Right lobe of liver (tissue), 6 donors: ENCODE measurements at regions of chr17 and their contacts with region 1.

Region 1: DNA sequence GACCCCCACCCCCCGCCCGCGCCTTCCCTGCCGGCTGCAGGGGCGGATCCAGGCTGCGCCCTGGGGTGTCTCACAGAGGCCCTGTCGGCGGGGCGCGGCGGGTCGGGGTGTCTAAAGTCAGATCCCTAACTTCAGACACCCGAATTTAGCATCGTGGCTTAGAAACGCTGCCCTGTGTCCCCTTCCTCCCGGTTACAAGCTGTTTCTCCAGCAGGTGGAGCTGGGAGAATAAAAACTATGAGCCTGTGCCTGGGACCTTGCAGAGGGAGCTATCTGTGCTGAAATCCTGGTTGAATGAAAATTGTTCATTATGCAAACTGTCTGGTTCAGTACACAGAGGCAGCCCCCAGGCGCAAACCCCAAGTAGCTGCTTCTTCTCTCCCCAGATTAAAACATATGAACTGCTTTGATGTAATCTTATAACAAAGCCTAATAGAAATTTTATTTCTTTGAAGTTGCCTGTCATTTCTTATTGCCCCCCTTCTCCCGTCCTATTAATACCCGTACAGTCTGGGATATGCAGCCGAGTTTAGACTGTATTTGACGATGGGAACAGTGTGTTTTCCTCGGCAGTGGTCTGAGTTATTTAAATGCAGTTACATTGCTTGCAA is 79.0 kb downstream of the RPA1 start:
- DNase-seq: peak; percentile 32 to 72 (median 56)
- ATAC-seq: peak; percentile 82 to 89 (median 86)
- H3K4me3 ChIP-seq: no peak overlapping the region
- H3K27ac ChIP-seq: no peak overlapping the region
- H3K4me1 ChIP-seq: peaks cover 3 to 20% (median 5%) of the 10 kb centered on the region in 4 donors
- H3K27me3 ChIP-seq: peaks cover 0 to 3% of the 10 kb centered on the region in 2 donors
- CTCF ChIP-seq: peak; percentile 74 to 86 (median 78)
- POLR2A ChIP-seq: no peak

Region 2: DNA sequence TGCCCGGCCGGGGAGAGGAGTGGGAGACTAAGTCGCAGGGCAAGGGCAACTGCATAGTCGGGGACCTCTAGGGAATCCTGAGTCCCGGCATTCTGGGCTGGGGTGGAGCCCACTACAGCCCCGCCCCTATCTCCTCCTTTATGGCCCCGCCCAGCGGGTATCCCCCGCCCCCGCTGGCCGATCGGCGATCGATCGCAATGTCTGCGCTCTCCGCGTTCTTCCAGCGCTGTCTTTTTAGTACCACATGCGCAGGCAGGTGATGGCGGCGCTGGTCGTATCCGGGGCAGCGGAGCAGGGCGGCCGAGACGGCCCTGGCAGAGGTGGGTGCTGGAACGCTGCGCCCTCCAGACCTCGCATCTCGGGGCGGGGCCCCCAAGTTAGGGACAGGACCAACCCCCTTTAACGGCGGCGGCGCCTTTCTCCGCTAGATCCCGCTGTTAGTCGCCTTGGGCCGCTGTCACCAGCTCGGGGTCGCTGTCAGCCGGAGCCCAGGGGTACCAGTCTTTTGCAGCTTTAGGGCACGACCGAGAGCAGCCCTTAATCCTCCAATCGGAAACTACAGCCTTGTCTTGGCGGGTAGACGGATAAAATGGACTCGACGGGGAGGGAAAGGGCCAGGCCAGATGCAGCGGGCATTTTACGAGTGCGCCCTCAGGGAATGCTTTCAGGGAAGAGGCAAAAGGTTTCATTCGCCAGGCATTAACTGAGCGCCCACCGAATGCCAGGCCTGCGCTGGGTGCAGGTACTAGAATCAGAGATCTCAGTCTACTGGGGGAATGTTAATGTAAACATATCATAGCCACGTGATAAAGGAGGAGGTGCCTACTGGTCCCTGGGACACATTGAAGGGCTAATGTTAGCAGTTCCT is 121.3 kb after region 1 on chr17 and contains the start of gene DPH1:
- intact Hi-C with region 1: loop called (anchors 5 kb)
- DNase-seq: peak; percentile 90 to 92 (median 91)
- ATAC-seq: peak; percentile 87 to 91 (median 88)
- H3K4me3 ChIP-seq: peak within 1 kb of the TSS; percentile 99 to 100 (median 99)
- H3K27ac ChIP-seq: peak within 1 kb of the TSS; percentile 48 to 57 (median 56)
- H3K4me1 ChIP-seq: peaks cover 0 to 23% (median 7%) of the 10 kb centered on the region in 4 donors
- H3K27me3 ChIP-seq: no peaks in the 10 kb centered on the region
- CTCF ChIP-seq: no peak
- POLR2A ChIP-seq: peak; percentile 12
- total RNA-seq, gene DPH1: 20.0 to 41.1 (median 25.4) TPM

Region 3: GRCh38 chr17:2041561-2042366 is 133.0 kb after region 1 on chr17 and contains the start of gene OVCA2:
- intact Hi-C with region 1: loop called (anchors 5 kb)
- DNase-seq: peak; percentile 96 to 97 (median 97)
- ATAC-seq: peak; percentile 93 to 98 (median 95)
- H3K4me3 ChIP-seq: peak within 1 kb of the TSS; percentile 64 to 98 (median 88)
- H3K27ac ChIP-seq: peak within 1 kb of the TSS; percentile 57 to 83 (median 77)
- H3K4me1 ChIP-seq: peaks cover 0 to 13% (median 0%) of the 10 kb centered on the region in 4 donors
- H3K27me3 ChIP-seq: no peaks in the 10 kb centered on the region
- CTCF ChIP-seq: peak; percentile 33 to 53 (median 42)
- POLR2A ChIP-seq: peak; percentile 71
- total RNA-seq, gene OVCA2: 10.3 to 36.2 (median 14.8) TPM